Prostate gland (tissue), 2 donors: ENCODE measurements at regions of chr10 and their contacts with region 1.

Region 1: GRCh38 chr10:42782446-42783180 is at the start of gene BMS1:
- DNase-seq: peak; percentile 88
- H3K4me3 ChIP-seq: peak within 1 kb of the TSS; percentile 57 to 61
- H3K27ac ChIP-seq: peak within 1 kb of the TSS; percentile 91 to 93
- H3K4me1 ChIP-seq: no peaks in the 10 kb centered on the region
- H3K27me3 ChIP-seq: no peaks in the 10 kb centered on the region
- CTCF ChIP-seq: no peak
- POLR2A ChIP-seq: peak; percentile 69
- total RNA-seq, gene BMS1: 10.2 to 18.2 TPM

Region 2: DNA sequence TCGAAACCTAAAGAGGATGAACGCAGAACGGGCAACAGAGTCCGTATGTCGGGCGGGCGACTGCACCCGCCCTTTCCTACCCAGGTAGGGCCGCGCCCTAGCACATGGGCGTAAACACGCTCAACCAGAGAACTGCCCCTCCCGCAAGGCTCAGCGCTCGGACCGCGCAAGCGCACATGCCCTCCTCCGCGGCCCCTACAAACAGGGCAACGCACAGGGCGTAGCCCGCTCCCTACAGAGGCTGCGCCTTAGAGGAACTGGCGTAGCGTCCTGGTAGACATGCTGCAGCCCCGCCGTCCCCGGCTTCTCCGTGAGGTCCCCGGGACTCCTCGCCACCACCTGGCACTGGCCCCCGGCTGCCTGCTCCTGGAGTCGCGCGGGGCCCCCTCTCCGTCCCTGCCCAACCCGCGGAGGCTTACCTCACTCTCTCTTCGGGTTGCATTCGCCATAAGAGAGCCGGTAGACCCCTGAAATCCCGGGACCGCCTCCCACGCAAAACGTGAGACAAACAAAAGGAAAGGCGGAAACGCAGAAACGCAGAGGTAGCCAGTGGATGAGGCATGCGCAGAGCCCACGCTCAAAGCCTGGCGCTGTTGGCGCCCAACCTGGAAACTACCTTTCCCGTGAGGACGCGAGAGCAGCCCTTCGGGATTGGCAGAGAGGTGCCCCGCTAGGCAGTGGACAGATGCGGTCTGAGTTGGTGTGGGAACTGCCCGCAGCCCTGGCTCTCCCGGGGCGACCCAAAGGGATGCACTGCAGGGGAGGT is 144.4 kb before region 1 on chr10 and contains the start of gene ZNF33B:
- intact Hi-C with region 1: loop called (anchors 5 kb)
- DNase-seq: peak; percentile 97
- H3K4me3 ChIP-seq: peak within 1 kb of the TSS; percentile 68 to 71
- H3K27ac ChIP-seq: peak within 1 kb of the TSS; percentile 95 to 96
- H3K4me1 ChIP-seq: no peaks in the 10 kb centered on the region
- H3K27me3 ChIP-seq: no peaks in the 10 kb centered on the region
- CTCF ChIP-seq: peak in 1 of 4 experiments; percentile 7
- POLR2A ChIP-seq: peak; percentile 73
- total RNA-seq, gene ZNF33B: 25.6 to 32.6 TPM